Vagina (tissue), 2 donors: ENCODE measurements at regions of chr9 and their contacts with region 1.

Region 1: DNA sequence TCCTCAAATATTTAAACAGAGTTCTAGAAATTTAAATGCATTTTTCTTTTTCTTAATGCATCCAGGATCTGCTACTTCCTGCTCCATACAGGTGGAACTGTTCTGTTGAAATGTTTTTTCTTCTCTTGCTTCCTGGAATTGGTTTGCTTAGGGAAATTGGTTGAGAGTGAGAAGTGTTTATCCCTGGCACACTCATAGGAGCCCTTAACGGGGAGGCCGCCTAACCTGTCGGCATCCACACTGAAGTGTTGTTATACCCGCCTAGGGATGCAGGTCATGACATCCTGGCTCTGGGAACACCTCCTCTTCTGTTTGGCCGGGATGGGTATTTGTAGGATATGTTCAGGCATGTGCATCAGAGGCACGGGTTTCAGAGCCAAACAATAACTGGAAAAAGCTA is 239.7 kb downstream of the GADD45G start:
- DNase-seq: no peak
- H3K4me3 ChIP-seq: no peak overlapping the region
- H3K27ac ChIP-seq: no peak overlapping the region
- H3K4me1 ChIP-seq: no peaks in the 10 kb centered on the region
- H3K27me3 ChIP-seq: no peaks in the 10 kb centered on the region
- CTCF ChIP-seq: no peak
- POLR2A ChIP-seq: no peak

Region 2: GRCh38 chr9:89770531-89771174 is 73.9 kb before region 1 on chr9:
- intact Hi-C with region 1: no loop called
- DNase-seq: no peak
- H3K4me3 ChIP-seq: no peak overlapping the region
- H3K27ac ChIP-seq: no peak overlapping the region
- H3K4me1 ChIP-seq: peaks cover 5% of the 10 kb centered on the region
- H3K27me3 ChIP-seq: no peaks in the 10 kb centered on the region
- CTCF ChIP-seq: no peak
- POLR2A ChIP-seq: no peak

Region 3: DNA sequence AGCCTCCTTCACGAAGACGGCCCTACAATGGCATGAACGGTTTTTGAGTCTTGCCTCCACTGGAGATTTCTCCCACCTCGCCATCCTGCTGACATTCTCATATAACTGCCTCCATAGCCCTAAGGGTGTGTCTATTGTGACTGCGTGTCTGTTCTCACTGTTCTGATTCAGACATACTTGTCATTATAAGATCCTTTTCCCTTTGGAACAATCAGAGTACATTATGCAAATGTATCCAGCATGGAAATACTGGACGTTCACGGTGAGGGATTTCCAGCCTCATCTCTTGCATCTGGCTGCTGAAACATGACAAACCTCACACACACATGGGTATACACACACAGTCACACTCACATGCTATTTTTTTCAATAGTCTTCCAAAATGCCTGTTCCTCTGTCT is 396.0 kb after region 1 on chr9:
- intact Hi-C with region 1: no loop called
- DNase-seq: no peak
- H3K4me3 ChIP-seq: no peak overlapping the region
- H3K27ac ChIP-seq: no peak overlapping the region
- H3K4me1 ChIP-seq: no peaks in the 10 kb centered on the region
- H3K27me3 ChIP-seq: no peaks in the 10 kb centered on the region
- CTCF ChIP-seq: no peak
- POLR2A ChIP-seq: no peak

Region 4: DNA sequence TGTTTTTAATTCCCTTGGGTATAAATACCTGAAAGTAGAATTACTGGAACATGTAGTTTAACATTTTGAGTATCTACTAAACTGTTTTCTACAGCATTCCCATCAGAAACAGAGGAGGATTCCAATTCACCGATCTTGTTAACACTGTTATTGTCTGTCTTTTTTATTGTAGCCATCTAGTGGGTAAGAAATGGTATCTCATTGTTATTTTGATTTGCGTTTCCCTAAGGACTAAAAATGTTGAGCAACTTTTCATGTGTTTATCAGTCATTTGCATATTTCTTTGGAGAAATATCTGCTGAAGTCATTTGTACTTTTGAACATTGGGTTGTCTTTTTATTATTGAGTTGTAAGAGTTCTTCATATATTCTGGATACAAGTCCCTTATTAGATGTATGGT is 1714.3 kb after region 1 on chr9:
- intact Hi-C with region 1: loop called (anchors 10 kb)
- DNase-seq: no peak
- H3K4me3 ChIP-seq: no peak overlapping the region
- H3K27ac ChIP-seq: no peak overlapping the region
- H3K4me1 ChIP-seq: no peaks in the 10 kb centered on the region
- H3K27me3 ChIP-seq: no peaks in the 10 kb centered on the region
- CTCF ChIP-seq: no peak
- POLR2A ChIP-seq: no peak